Activated CD4-positive, alpha-beta T cell treated with anti-CD3 and anti-CD28 coated beads, Interleukin-2, amount 10 ng/mL, durations not matched to agents 7 days and 5 days (primary cell): ENCODE measurements at regions of chr22 and their contacts with region 1.

Region 1: GRCh38 chr22:36350751-36351594 is 36.8 kb downstream of the MYH9 start:
- DNase-seq: no peak
- H3K4me3 Mint-ChIP-seq: no peak overlapping the region
- H3K27ac Mint-ChIP-seq: no peak overlapping the region
- H3K4me1 Mint-ChIP-seq: peaks cover 86% of the 10 kb centered on the region
- H3K27me3 Mint-ChIP-seq: no peaks in the 10 kb centered on the region

Region 2: GRCh38 chr22:36339171-36340065 is 11.6 kb before region 1 on chr22:
- CTCF ChIA-PET with region 1: interaction called, 16 read pairs
- POLR2A ChIA-PET with region 1: interaction called, 4 read pairs
- DNase-seq: peak; percentile 48
- H3K4me3 Mint-ChIP-seq: no peak overlapping the region
- H3K27ac Mint-ChIP-seq: peak overlapping the region; percentile 82
- H3K4me1 Mint-ChIP-seq: peaks cover 91% of the 10 kb centered on the region
- H3K27me3 Mint-ChIP-seq: no peaks in the 10 kb centered on the region

Region 3: GRCh38 chr22:36365020-36365411 is 14.0 kb after region 1 on chr22:
- CTCF ChIA-PET with region 1: interaction called, 19 read pairs
- POLR2A ChIA-PET with region 1: interaction called, 5 read pairs
- DNase-seq: peak; percentile 90
- H3K4me3 Mint-ChIP-seq: peak overlapping the region; percentile 49
- H3K27ac Mint-ChIP-seq: peak overlapping the region; percentile 90
- H3K4me1 Mint-ChIP-seq: peaks cover 94% of the 10 kb centered on the region
- H3K27me3 Mint-ChIP-seq: no peaks in the 10 kb centered on the region